Naive thymus-derived CD4-positive, alpha-beta T cell (primary cell): ENCODE measurements at regions of chr6 and their contacts with region 1.

Region 1: GRCh38 chr6:50720623-50721022 is 7.3 kb downstream of the TFAP2D start:
- DNase-seq: no peak
- ATAC-seq: no peak
- H3K4me3 ChIP-seq: no peak overlapping the region
- H3K4me3 Mint-ChIP-seq: no peak overlapping the region
- H3K27ac ChIP-seq: no peak overlapping the region
- H3K27ac Mint-ChIP-seq: no peak overlapping the region
- H3K4me1 ChIP-seq: no peaks in the 10 kb centered on the region
- H3K4me1 Mint-ChIP-seq: peaks cover 0 to 15% (median 0%) of the 10 kb centered on the region in 7 donors
- H3K27me3 ChIP-seq: peaks cover 0 to 8% of the 10 kb centered on the region in 2 donors
- H3K27me3 Mint-ChIP-seq: peaks cover 76 to 90% (median 81%) of the 10 kb centered on the region in 5 donors

Region 2: GRCh38 chr6:50843842-50844241 is 123.2 kb after region 1 on chr6:
- CTCF ChIA-PET with region 1: no interaction called
- POLR2A ChIA-PET with region 1: no interaction called
- intact Hi-C with region 1: loop called in 1 of 2 experiments (anchors 5 kb)
- DNase-seq: no peak
- ATAC-seq: no peak
- H3K4me3 ChIP-seq: no peak overlapping the region
- H3K4me3 Mint-ChIP-seq: no peak overlapping the region
- H3K27ac ChIP-seq: no peak overlapping the region
- H3K27ac Mint-ChIP-seq: peak overlapping the region in 1 of 9 donors; percentile 42
- H3K4me1 ChIP-seq: no peaks in the 10 kb centered on the region
- H3K4me1 Mint-ChIP-seq: peaks cover 0 to 1% (median 0%) of the 10 kb centered on the region in 7 donors
- H3K27me3 ChIP-seq: peaks cover 0 to 13% of the 10 kb centered on the region in 2 donors
- H3K27me3 Mint-ChIP-seq: peaks cover 82 to 93% (median 85%) of the 10 kb centered on the region in 5 donors

Region 3: GRCh38 chr6:51139950-51140385 is 419.3 kb after region 1 on chr6:
- CTCF ChIA-PET with region 1: no interaction called
- POLR2A ChIA-PET with region 1: no interaction called
- intact Hi-C with region 1: no loop called
- DNase-seq: no peak
- ATAC-seq: no peak
- H3K4me3 ChIP-seq: no peak overlapping the region
- H3K4me3 Mint-ChIP-seq: no peak overlapping the region
- H3K27ac ChIP-seq: no peak overlapping the region
- H3K27ac Mint-ChIP-seq: no peak overlapping the region
- H3K4me1 ChIP-seq: no peaks in the 10 kb centered on the region
- H3K4me1 Mint-ChIP-seq: no peaks in the 10 kb centered on the region
- H3K27me3 ChIP-seq: no peaks in the 10 kb centered on the region
- H3K27me3 Mint-ChIP-seq: no peaks in the 10 kb centered on the region

Region 4: GRCh38 chr6:51495610-51496396 is 775.2 kb after region 1 on chr6:
- CTCF ChIA-PET with region 1: no interaction called
- POLR2A ChIA-PET with region 1: no interaction called
- intact Hi-C with region 1: no loop called
- DNase-seq: no peak
- ATAC-seq: no peak
- H3K4me3 ChIP-seq: no peak overlapping the region
- H3K4me3 Mint-ChIP-seq: no peak overlapping the region
- H3K27ac ChIP-seq: no peak overlapping the region
- H3K27ac Mint-ChIP-seq: no peak overlapping the region
- H3K4me1 ChIP-seq: no peaks in the 10 kb centered on the region
- H3K4me1 Mint-ChIP-seq: no peaks in the 10 kb centered on the region
- H3K27me3 ChIP-seq: no peaks in the 10 kb centered on the region
- H3K27me3 Mint-ChIP-seq: no peaks in the 10 kb centered on the region